ENCODE measurements at regions of chr19 and their contacts with region 1.

Region 1: DNA sequence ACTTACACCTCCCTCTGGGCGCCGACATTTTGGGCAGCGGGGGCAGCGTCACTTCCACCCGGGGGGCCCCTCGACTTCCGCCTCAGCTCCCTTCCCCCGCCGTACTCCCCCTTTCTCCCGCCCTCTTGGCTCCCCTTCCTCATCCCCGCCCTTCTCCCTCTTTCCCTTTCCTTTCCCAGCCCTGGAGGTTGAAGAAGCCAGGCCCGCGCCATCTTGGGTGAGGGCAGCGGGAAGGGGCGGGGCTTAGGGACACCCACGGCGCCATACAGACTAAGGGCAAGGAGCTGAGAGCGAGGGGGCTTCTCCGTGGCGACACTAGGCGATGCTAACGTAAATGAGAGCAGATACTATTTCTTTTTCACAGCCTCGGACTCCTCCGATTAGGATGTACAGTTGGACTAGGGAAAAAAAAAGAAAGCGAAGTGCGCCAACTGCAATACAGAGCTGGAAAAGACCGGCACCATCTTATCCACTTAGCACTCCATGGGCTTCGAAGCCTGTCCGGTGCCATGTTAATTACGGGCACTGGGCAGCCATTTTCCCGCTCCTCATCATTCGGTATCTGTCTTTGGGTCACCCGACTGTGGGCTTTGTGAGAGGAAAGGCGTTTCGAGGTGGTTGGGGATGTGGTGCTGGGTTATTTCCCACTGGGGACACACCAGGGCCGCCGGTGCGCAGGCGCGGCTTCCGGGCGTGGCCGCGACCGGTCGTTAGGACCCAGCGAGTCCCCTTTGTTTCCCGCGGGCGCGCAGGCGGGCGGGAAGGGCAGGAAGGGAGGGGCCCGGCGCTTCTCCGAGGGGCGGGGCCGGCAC is at the start of gene FIZ1:
- DNase-seq: peak; percentile 88 to 97 (median 95)
- ATAC-seq: peak; percentile 84
- H3K4me3 ChIP-seq: peak within 1 kb of the TSS; percentile 93
- H3K4me3 Mint-ChIP-seq: peak within 1 kb of the TSS; percentile 90 to 100 (median 99)
- H3K27ac ChIP-seq: peak within 1 kb of the TSS; percentile 93
- H3K27ac Mint-ChIP-seq: peak within 1 kb of the TSS; percentile 97 to 100 (median 99)
- H3K4me1 ChIP-seq: peaks cover 0 to 15% of the 10 kb centered on the region in 2 donors
- H3K4me1 Mint-ChIP-seq: peaks cover 20 to 36% (median 30%) of the 10 kb centered on the region in 7 donors
- H3K27me3 ChIP-seq: no peaks in the 10 kb centered on the region
- H3K27me3 Mint-ChIP-seq: no peaks in the 10 kb centered on the region
- total RNA-seq, gene FIZ1: 9.4 to 32.0 (median 16.1) TPM

Region 2: GRCh38 chr19:55339048-55339888 is 260.4 kb before region 1 on chr19 and contains the start of gene KMT5C:
- CTCF ChIA-PET with region 1: no interaction called
- POLR2A ChIA-PET with region 1: interaction called, 7 read pairs
- intact Hi-C with region 1: loop called (anchors 1 kb)
- DNase-seq: peak; percentile 99 to 100 (median 100)
- ATAC-seq: peak; percentile 83
- H3K4me3 ChIP-seq: peak within 1 kb of the TSS; percentile 80
- H3K4me3 Mint-ChIP-seq: peak within 1 kb of the TSS; percentile 87 to 99 (median 96)
- H3K27ac ChIP-seq: peak within 1 kb of the TSS; percentile 93
- H3K27ac Mint-ChIP-seq: peak within 1 kb of the TSS; percentile 88 to 100 (median 97)
- H3K4me1 ChIP-seq: peaks cover 8 to 15% of the 10 kb centered on the region in 2 donors
- H3K4me1 Mint-ChIP-seq: peaks cover 5 to 28% (median 24%) of the 10 kb centered on the region in 7 donors
- H3K27me3 ChIP-seq: no peaks in the 10 kb centered on the region
- H3K27me3 Mint-ChIP-seq: peaks cover 0 to 16% (median 0%) of the 10 kb centered on the region in 5 donors
- total RNA-seq, gene KMT5C: 21.8 to 63.3 (median 27.2) TPM

Region 3: DNA sequence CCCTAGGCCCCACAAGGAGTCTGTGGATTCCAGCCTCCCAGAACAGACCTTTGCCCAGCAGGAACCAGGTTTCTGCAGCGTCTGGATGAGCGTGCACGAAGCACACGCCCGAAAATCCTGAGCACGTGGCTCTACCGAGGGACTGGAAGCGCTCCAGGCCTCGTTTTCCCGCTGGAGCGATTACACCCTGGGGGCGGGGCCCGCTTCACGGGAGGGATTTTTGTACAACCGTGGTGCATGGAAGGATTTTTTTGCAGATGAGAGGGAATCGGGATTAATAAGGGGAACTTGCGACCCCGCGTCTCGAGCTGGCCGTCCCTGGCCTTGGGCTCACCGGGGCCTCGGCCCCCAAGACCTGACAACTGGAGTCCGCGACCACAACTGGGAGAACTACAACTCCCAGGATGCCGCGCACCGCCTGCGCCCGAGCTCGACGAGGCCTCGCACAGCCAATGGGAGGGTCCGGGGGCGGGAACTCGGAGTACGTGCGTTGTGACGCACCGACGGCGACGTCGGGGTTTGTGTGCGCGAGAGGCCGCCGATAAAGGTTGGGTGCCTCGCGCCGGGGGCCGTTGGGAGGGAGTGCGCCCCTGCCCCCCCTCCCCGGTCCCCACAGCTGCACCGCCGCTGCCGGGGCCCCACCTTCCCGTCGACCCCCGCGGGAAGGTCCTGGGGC is 123.4 kb before region 1 on chr19 and contains the start of gene ZNF628:
- CTCF ChIA-PET with region 1: no interaction called
- POLR2A ChIA-PET with region 1: interaction called, 15 read pairs
- intact Hi-C with region 1: loop called (anchors 1 kb)
- DNase-seq: peak; percentile 88 to 98 (median 96)
- ATAC-seq: peak; percentile 96
- H3K4me3 ChIP-seq: peak within 1 kb of the TSS; percentile 96
- H3K4me3 Mint-ChIP-seq: peak within 1 kb of the TSS; percentile 83 to 93 (median 90)
- H3K27ac ChIP-seq: peak within 1 kb of the TSS; percentile 90
- H3K27ac Mint-ChIP-seq: peak within 1 kb of the TSS; percentile 81 to 95 (median 92)
- H3K4me1 ChIP-seq: peaks cover 14 to 15% of the 10 kb centered on the region in 2 donors
- H3K4me1 Mint-ChIP-seq: peaks cover 15 to 41% (median 29%) of the 10 kb centered on the region in 7 donors
- H3K27me3 ChIP-seq: no peaks in the 10 kb centered on the region
- H3K27me3 Mint-ChIP-seq: no peaks in the 10 kb centered on the region
- total RNA-seq, gene ZNF628: 6.6 to 27.2 (median 9.0) TPM

Region 4: GRCh38 chr19:55586976-55587668 is 12.6 kb before region 1 on chr19:
- CTCF ChIA-PET with region 1: interaction called, 8 read pairs
- POLR2A ChIA-PET with region 1: interaction called, 44 read pairs
- intact Hi-C with region 1: loop called (anchors 1 kb)
- DNase-seq: peak; percentile 83 to 92 (median 89)
- ATAC-seq: peak; percentile 99
- H3K4me3 ChIP-seq: peak overlapping the region; percentile 63
- H3K4me3 Mint-ChIP-seq: peak overlapping the region; percentile 83 to 95 (median 88)
- H3K27ac ChIP-seq: peak overlapping the region; percentile 32
- H3K27ac Mint-ChIP-seq: peak overlapping the region; percentile 16 to 88 (median 86)
- H3K4me1 ChIP-seq: peaks cover 10 to 22% of the 10 kb centered on the region in 2 donors
- H3K4me1 Mint-ChIP-seq: peaks cover 8 to 41% (median 27%) of the 10 kb centered on the region in 7 donors
- H3K27me3 ChIP-seq: no peaks in the 10 kb centered on the region
- H3K27me3 Mint-ChIP-seq: peaks cover 0 to 32% (median 0%) of the 10 kb centered on the region in 5 donors

Region 5: DNA sequence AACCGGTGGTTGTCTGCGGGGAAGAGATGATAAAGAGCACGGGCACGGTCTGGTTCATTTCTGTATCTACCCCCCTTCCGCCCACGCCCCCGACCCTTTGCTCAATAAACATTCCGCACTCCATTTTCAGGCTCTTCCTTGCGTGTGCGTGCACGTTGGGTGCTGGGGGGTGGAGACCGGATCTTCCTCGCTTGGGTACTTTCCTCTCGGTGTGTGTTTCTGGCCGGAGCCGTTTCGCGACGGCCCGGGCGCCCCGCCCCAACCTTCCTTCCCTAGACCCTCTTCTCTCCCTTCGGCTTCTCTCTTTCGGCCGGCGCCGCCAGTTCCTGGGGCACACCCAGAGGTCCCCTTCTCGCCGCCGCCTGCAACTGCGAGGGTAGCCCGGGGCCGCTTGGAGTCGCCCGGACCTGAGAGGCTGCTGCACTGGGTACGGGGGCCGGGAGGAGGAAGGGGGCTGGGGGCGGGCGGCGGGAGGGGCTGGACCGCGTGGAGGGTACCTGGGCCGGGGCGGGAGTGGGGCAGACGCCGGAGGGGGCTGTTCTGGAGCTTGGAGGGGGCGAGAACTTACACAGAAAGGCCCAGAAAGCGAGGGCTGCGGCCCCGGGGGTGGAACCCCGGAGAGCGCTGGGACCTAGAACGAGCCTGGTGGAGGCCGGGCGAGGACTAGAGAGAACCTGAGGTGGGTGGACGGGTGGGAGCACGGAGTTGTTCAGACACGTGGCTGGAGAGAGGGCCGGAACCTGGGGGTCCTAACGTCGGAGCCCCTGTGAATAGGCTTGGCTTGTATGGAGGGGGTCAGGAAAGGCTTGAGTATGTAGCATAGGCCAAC is 43.9 kb after region 1 on chr19 and contains the start of gene ZNF581:
- CTCF ChIA-PET with region 1: no interaction called
- POLR2A ChIA-PET with region 1: interaction called, 19 read pairs
- intact Hi-C with region 1: loop called in 1 of 2 experiments (anchors 1 kb)
- DNase-seq: peak; percentile 63 to 85 (median 81)
- ATAC-seq: peak; percentile 73
- H3K4me3 ChIP-seq: peak within 1 kb of the TSS; percentile 80
- H3K4me3 Mint-ChIP-seq: peak within 1 kb of the TSS; percentile 87 to 97 (median 94)
- H3K27ac ChIP-seq: peak within 1 kb of the TSS; percentile 80
- H3K27ac Mint-ChIP-seq: peak within 1 kb of the TSS; percentile 91 to 98 (median 96)
- H3K4me1 ChIP-seq: peaks cover 24 to 25% of the 10 kb centered on the region in 2 donors
- H3K4me1 Mint-ChIP-seq: peaks cover 23 to 63% (median 54%) of the 10 kb centered on the region in 7 donors
- H3K27me3 ChIP-seq: no peaks in the 10 kb centered on the region
- H3K27me3 Mint-ChIP-seq: no peaks in the 10 kb centered on the region
- total RNA-seq, gene ZNF581: 27.0 to 35.8 (median 32.1) TPM

Region 6: DNA sequence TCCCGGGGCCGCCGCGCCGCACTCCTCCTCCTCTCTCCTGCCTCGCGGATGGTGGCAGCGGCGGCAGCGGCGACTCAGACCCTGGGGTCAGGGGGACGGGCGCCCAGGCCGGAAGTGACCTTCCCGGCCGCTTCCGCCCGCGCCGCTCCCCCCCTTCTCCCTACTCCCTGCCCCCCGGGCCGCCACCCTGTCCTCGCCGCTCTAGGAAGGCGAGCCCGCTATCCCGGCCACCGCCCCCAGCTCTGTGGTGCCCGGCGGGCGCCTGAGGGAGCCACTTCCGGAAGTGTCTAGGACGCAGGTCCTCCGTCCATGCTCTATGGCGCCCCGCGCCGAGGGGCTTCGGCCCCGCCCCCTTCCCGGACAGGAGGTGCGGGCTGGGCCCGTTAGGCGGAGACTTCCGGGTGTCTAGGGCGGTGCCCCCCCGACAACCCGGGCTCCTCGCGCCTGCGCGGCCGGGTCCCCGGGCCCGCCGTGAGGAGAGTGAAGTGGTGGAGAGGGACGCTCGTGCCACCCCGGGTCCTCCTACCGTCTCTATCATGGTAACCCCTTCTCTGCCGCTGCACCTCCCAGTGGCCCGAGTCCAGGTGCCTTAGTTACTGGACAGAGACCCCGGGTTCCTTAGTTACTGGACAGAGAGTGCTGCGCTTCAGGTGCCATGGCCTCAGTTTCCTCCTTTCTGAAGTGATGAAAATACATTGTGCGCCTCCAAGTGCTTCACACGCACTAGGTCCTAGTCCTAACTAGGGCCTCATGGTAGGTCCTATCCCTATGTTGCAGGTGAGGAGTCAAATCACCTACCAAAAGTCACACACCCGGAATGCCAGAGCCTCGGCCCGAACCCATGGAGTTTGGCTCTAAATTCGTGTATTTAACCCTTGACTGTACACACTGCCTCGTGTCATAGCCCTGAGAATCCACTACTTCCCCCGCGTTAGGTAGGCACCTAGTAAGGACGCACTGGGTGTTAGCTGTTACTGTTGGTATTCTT is 521.8 kb after region 1 on chr19 and contains the start of gene ZNF787:
- CTCF ChIA-PET with region 1: no interaction called
- POLR2A ChIA-PET with region 1: no interaction called
- intact Hi-C with region 1: loop called in 1 of 2 experiments (anchors 1 kb)
- DNase-seq: peak; percentile 94 to 98 (median 98)
- ATAC-seq: peak; percentile 88
- H3K4me3 ChIP-seq: peak within 1 kb of the TSS; percentile 79
- H3K4me3 Mint-ChIP-seq: peak within 1 kb of the TSS; percentile 85 to 93 (median 88)
- H3K27ac ChIP-seq: peak within 1 kb of the TSS; percentile 97
- H3K27ac Mint-ChIP-seq: peak within 1 kb of the TSS; percentile 87 to 98 (median 95)
- H3K4me1 ChIP-seq: peaks cover 8 to 34% of the 10 kb centered on the region in 2 donors
- H3K4me1 Mint-ChIP-seq: peaks cover 17 to 72% (median 58%) of the 10 kb centered on the region in 7 donors
- H3K27me3 ChIP-seq: no peaks in the 10 kb centered on the region
- H3K27me3 Mint-ChIP-seq: no peaks in the 10 kb centered on the region
- total RNA-seq, gene ZNF787: 19.7 to 41.2 (median 33.0) TPM